ENCODE measurements at regions of chr17 and their contacts with region 1.

Region 1: DNA sequence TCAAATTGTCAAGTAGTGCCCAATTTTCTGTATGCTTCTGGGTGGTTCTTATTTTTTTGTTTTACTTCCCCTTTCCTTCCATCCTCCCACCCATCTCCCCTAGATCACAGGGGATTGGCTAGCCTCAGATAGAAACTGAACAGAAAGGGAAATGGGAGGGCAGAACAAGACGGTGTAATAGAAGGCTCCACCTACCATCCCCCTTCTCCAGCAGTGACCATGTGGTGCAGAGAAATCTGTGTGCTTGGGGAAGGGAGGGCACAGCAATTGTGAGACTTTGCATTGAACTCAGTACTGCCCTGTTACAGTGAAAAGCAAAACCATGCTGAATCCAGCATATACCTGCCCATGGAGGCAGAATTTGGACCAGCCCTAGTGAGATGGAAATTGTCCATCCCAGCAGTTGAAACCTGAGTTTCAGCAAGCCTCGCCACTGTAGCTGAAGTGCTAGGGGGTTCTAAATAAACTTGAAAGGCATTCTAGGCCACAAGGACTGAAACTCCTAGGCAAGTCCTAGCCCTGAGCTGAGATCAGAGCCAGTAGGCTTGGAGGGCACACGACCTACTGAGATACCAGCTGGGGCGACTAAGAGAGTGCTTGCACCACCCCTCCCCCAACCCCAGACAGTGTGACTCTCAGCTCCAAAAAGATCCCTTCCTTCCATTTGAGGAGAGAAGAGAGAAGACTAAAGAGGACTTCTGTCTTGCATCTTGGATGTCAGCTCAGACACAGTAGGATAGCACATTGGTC is 5.2 kb downstream of the SLFN11 start:
- DNase-seq: peak; percentile 88
- ATAC-seq: peak; percentile 100
- H3K4me3 ChIP-seq: peak overlapping the region in 4 of 5 experiments; percentile 3 to 53 (median 34)
- H3K4me3 Mint-ChIP-seq: peak overlapping the region; percentile 75
- H3K27ac ChIP-seq: peak overlapping the region; percentile 33 to 67
- H3K27ac Mint-ChIP-seq: peak overlapping the region; percentile 88
- H3K4me1 ChIP-seq: peaks cover 22 to 27% of the 10 kb centered on the region in 2 donors
- H3K4me1 Mint-ChIP-seq: peaks cover 58% of the 10 kb centered on the region
- H3K27me3 ChIP-seq: no peaks in the 10 kb centered on the region
- H3K27me3 Mint-ChIP-seq: no peaks in the 10 kb centered on the region
- CTCF ChIP-seq: no peak

Region 2: GRCh38 chr17:35345926-35346771 is 22.1 kb before region 1 on chr17:
- CTCF ChIA-PET with region 1: no interaction called
- POLR2A ChIA-PET with region 1: no interaction called
- intact Hi-C with region 1: loop called (anchors 1 kb)
- DNase-seq: peak; percentile 52
- ATAC-seq: peak; percentile 60
- H3K4me3 ChIP-seq: peak overlapping the region; percentile 50 to 80 (median 63)
- H3K4me3 Mint-ChIP-seq: peak overlapping the region; percentile 95
- H3K27ac ChIP-seq: peak overlapping the region; percentile 36 to 59
- H3K27ac Mint-ChIP-seq: peak overlapping the region; percentile 83
- H3K4me1 ChIP-seq: peaks cover 24 to 26% of the 10 kb centered on the region in 2 donors
- H3K4me1 Mint-ChIP-seq: peaks cover 39% of the 10 kb centered on the region
- H3K27me3 ChIP-seq: no peaks in the 10 kb centered on the region
- H3K27me3 Mint-ChIP-seq: no peaks in the 10 kb centered on the region
- CTCF ChIP-seq: no peak

Region 3: GRCh38 chr17:35587074-35587971 is 219.1 kb after region 1 on chr17 and contains the start of gene AP2B1:
- CTCF ChIA-PET with region 1: no interaction called
- POLR2A ChIA-PET with region 1: no interaction called
- intact Hi-C with region 1: loop called (anchors 5 kb)
- DNase-seq: peak; percentile 99
- ATAC-seq: peak; percentile 98
- H3K4me3 ChIP-seq: peak within 1 kb of the TSS; percentile 59 to 100 (median 90)
- H3K4me3 Mint-ChIP-seq: peak within 1 kb of the TSS; percentile 92
- H3K27ac ChIP-seq: peak within 1 kb of the TSS; percentile 83 to 89
- H3K27ac Mint-ChIP-seq: peak within 1 kb of the TSS; percentile 95
- H3K4me1 ChIP-seq: peaks cover 11 to 19% of the 10 kb centered on the region in 2 donors
- H3K4me1 Mint-ChIP-seq: peaks cover 33% of the 10 kb centered on the region
- H3K27me3 ChIP-seq: no peaks in the 10 kb centered on the region
- H3K27me3 Mint-ChIP-seq: peaks cover 7% of the 10 kb centered on the region
- CTCF ChIP-seq: no peak
- total RNA-seq, gene AP2B1: 120 and 123 TPM in 2 replicates